BJ (cell line): ENCODE measurements at regions of chr9 and their contacts with region 1.

Region 1: GRCh38 chr9:129495534-129496325 is 125.2 kb downstream of the C9orf50 start:
- DNase-seq: no peak
- H3K4me3 ChIP-seq: peak overlapping the region; percentile 82
- H3K27me3 ChIP-seq: no peaks in the 10 kb centered on the region
- CTCF ChIP-seq: no peak

Region 2: DNA sequence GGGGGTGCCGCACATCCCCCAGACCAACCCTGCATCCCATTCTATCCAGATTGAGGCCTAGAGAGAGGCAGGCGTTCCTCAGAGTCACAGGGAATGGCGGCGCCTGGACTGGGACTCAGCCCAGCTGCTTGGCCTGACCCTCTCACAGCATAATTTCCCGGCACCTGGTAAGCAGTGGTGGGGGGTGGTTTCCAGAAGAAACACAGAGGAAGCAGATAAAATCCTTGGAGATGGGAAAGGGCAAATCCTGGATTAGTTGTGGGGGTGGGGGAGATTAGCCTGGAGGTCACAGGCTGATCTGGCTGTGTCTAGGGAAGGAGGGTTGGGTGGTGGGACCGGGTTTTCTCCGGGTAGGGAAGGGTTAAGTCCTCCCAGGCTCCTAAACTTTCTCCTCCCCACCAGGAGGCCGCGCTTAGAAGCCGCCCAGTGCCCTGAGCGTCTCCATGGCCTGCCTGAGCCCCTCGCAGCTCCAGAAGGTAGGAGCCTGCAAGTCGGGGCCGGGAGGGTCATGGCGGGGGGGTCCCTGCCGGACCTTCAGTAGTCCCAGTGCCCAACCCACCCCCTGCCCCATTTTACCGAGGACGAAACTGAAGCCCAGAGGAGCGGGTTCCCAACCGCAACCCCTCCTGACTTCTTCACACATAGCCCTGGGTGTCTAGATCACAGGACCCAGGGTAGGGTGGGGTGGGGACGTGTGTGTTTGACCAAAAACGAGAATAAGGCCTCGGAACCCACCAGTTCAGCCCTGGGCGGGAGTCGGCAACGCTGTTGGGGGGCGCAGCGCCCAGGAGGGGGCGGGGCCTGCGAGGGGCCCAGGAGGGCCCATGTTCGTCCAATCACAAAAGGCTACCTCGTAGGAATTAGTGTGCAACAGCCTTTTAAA is 573.6 kb before region 1 on chr9:
- CTCF ChIA-PET with region 1: no interaction called
- POLR2A ChIA-PET with region 1: interaction called, 13 read pairs
- DNase-seq: no peak
- H3K4me3 ChIP-seq: peak overlapping the region; percentile 53
- H3K27me3 ChIP-seq: no peaks in the 10 kb centered on the region
- CTCF ChIP-seq: no peak

Region 3: DNA sequence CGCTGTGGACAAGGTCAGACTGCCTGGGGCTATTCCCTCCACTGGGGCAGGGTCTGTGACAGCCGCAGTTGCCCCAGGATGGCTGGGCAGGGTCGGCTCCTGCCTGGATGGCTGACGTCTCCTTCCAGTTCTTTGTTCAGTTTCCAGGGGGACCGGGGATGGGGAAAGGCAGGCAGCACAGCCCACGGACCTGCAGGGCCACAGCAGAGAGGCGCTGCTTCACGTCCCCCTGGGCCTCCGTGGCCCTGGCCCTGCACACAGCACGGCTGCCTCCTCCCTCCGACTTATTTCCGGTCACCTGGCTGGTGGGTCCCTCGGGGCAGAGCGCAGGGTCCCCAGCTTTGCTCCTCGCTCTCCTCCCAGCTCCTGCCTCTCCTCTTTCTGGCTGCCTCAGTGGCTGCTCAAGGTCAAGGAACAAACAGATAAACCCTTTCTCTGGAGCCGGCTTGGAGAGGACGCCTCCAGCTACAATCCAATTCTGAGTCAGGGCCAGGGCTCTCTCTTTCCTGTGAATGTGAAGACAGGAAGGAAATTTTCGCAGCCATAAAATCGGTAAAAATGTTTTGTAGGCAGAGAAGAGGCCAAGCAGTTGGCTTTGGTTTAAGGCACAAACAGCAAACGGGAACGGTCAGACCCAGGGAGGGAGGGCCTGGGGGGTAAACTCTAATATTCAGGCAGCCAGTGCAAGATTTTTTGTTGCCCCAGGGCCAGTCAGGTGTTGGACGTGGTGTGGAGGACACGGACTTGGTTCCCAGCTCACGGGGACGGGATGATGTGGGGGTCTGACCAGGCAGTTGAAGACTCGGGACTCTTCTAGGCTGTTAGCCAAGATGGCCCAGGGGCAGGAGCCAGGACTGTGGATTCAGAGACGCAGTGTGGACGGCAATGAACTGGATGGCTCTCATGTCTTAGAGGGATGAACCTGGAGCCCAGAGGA is 44.4 kb before region 1 on chr9:
- CTCF ChIA-PET with region 1: no interaction called
- POLR2A ChIA-PET with region 1: no interaction called
- DNase-seq: no peak
- H3K4me3 ChIP-seq: no peak overlapping the region
- H3K27me3 ChIP-seq: no peaks in the 10 kb centered on the region
- CTCF ChIP-seq: no peak

Region 4: DNA sequence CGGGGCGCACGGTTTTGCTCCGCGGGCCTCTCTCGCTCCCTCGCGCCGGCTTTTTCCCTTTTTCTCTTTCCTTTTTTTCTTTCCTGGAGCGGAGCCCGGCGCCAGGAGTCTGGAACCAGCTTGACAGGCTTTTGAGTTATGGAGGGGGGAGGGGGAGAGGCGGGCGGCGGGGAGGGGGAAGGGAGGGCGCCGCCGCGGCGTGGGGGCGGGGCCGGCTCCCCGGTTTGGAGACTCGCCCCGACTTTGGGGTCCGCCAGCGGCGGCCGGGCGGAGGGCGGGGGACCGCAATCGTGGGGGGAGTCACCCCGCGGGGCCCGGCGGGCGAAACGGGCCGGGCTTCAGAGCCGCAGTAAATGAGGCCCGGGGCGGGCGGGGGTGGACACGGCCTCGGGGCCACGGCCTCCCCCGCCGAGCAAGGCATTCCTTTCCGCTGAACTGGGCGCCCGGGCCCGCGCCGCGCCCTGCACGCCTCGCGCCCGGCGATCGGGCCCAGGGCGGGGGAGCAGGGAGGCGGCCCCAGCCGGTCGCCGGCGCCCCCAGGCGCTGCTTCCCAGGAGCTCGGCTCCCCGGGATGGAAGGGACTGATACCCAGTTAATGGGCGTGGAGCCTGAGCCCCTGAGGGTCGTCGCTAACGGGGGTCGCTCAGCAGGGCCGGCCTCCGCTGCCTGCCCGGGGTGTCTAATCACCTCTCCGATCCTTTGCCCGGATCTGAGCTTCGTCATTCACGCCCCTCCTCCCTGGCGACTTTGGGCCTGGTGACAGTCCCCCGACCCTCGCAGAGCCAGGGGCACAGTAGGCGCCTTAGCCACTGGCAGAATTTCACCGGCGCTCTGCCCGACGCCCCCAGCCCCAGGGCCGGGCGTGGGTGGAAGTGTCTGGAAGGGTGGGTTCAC is 13.0 kb before region 1 on chr9:
- CTCF ChIA-PET with region 1: interaction called, 11 read pairs
- POLR2A ChIA-PET with region 1: interaction called, 21 read pairs
- DNase-seq: peak; percentile 48
- H3K4me3 ChIP-seq: peak overlapping the region; percentile 20; the same call in 1 of the 2 replicates
- H3K27me3 ChIP-seq: no peaks in the 10 kb centered on the region
- CTCF ChIP-seq: peak; percentile 19; the same call in 1 of the 2 replicates

Region 5: GRCh38 chr9:129574911-129575461 is 79.3 kb after region 1 on chr9:
- CTCF ChIA-PET with region 1: interaction called, 18 read pairs
- POLR2A ChIA-PET with region 1: interaction called, 12 read pairs
- DNase-seq: no peak
- H3K4me3 ChIP-seq: no peak overlapping the region
- H3K27me3 ChIP-seq: no peaks in the 10 kb centered on the region
- CTCF ChIP-seq: no peak

Region 6: DNA sequence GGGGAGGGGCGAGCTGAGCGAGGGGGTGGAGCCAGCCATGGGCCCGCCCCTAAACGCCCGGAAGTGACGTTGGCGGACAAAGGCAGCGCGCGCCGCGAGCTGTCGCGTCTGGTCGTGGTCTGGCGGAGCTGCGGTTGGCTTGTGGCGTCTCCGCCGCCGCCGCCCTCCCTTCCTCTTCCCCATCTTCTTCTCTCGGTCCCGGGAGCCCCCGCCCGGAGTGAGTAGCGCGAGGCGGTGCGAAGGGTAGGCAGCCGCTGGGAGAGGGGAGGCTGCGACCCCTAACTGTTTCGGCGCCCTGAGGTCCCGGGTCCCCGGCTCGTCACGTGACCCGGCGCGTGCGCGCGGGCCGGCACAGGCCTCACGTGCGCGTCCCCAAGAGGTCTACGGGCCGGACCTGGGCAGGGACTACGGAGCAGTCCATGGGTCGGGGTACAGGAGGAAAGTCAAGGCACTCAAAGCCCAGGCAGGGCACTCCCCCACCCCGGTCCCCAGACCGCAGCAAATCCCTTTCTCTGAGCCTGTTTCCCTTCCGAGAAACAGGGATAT is 130.4 kb after region 1 on chr9 and contains the start of gene NTMT1:
- CTCF ChIA-PET with region 1: interaction called, 6 read pairs
- POLR2A ChIA-PET with region 1: interaction called, 15 read pairs
- DNase-seq: no peak
- H3K4me3 ChIP-seq: peak within 1 kb of the TSS; percentile 88
- H3K27me3 ChIP-seq: no peaks in the 10 kb centered on the region
- CTCF ChIP-seq: no peak
- polyA plus RNA-seq, gene NTMT1: 77.1 and 96.3 TPM in 2 replicates

Region 7: GRCh38 chr9:130042833-130043653 is 547.3 kb after region 1 on chr9 and contains the start of gene FNBP1:
- CTCF ChIA-PET with region 1: no interaction called
- POLR2A ChIA-PET with region 1: no interaction called
- DNase-seq: no peak
- H3K4me3 ChIP-seq: peak within 1 kb of the TSS; percentile 59
- H3K27me3 ChIP-seq: no peaks in the 10 kb centered on the region
- CTCF ChIP-seq: no peak
- polyA plus RNA-seq, gene FNBP1: 7.8 and 15.0 TPM in 2 replicates